Breast epithelium (tissue), 4 donors: ENCODE measurements at regions of chr5 and their contacts with region 1.

Region 1: DNA sequence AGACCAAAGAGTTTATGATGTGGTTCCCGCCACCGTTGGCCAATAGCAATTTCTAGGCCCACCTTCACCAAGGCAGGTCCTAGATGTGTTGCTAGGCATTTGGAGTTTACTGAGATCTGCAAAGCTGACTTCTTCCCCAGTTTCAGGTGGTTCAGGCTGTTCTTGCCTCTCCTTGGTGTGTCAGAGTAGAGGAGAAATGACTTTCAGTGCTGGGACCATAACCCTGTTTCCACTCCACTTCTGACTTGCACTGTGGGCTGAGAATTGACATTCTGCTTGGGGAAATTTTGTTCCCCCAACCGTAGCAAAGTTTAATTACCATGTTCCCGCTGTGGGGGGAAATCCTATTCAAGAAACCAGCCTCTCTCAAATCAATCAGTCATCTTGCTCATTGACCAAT is 128.0 kb upstream of the GABRP start:
- DNase-seq: no peak
- H3K4me3 ChIP-seq: no peak overlapping the region
- H3K27ac ChIP-seq: no peak overlapping the region
- H3K4me1 ChIP-seq: no peaks in the 10 kb centered on the region
- H3K27me3 ChIP-seq: no peaks in the 10 kb centered on the region
- CTCF ChIP-seq: no peak
- POLR2A ChIP-seq: no peak

Region 2: GRCh38 chr5:169289520-169289919 is 1366.0 kb before region 1 on chr5:
- intact Hi-C with region 1: no loop called
- DNase-seq: no peak
- H3K4me3 ChIP-seq: no peak overlapping the region
- H3K27ac ChIP-seq: peak overlapping the region in 1 of 2 donors; percentile 9
- H3K4me1 ChIP-seq: peaks cover 0 to 3% of the 10 kb centered on the region in 2 donors
- H3K27me3 ChIP-seq: no peaks in the 10 kb centered on the region
- CTCF ChIP-seq: no peak
- POLR2A ChIP-seq: no peak

Region 3: GRCh38 chr5:169599451-169599850 is 1056.0 kb before region 1 on chr5:
- intact Hi-C with region 1: loop called (anchors 5 kb)
- DNase-seq: no peak
- H3K4me3 ChIP-seq: no peak overlapping the region
- H3K27ac ChIP-seq: no peak overlapping the region
- H3K4me1 ChIP-seq: no peaks in the 10 kb centered on the region
- H3K27me3 ChIP-seq: no peaks in the 10 kb centered on the region
- CTCF ChIP-seq: no peak
- POLR2A ChIP-seq: no peak

Region 4: GRCh38 chr5:170681013-170681433 is 25.5 kb after region 1 on chr5:
- intact Hi-C with region 1: no loop called
- DNase-seq: no peak
- H3K4me3 ChIP-seq: no peak overlapping the region
- H3K27ac ChIP-seq: no peak overlapping the region
- H3K4me1 ChIP-seq: no peaks in the 10 kb centered on the region
- H3K27me3 ChIP-seq: peaks cover 0 to 20% of the 10 kb centered on the region in 2 donors
- CTCF ChIP-seq: no peak
- POLR2A ChIP-seq: no peak

Region 5: DNA sequence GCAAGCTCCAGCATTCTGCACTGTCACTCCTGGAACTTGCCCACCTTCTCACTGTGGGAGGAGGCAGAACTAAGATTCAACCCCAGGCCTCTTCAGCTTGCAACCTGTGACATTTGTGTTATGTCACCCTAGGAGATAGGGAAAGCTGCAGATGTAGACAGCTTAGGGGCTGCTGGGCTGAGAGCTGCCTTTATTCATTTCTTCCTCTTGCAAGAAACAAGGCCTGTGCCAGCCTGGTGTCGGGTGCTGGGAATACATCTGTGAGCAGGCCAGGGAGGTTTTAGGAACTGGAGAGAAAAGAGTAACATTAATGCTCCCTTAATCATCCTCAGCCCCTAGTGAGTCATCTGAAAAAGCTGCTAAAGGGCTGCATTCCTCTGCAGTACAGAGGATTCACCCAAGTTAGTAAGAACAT is 865.8 kb after region 1 on chr5:
- intact Hi-C with region 1: no loop called
- DNase-seq: no peak
- H3K4me3 ChIP-seq: no peak overlapping the region
- H3K27ac ChIP-seq: peak overlapping the region; percentile 11 to 80
- H3K4me1 ChIP-seq: no peaks in the 10 kb centered on the region
- H3K27me3 ChIP-seq: no peaks in the 10 kb centered on the region
- CTCF ChIP-seq: no peak
- POLR2A ChIP-seq: no peak